IMR-90 (cell line): ENCODE measurements at regions of chr2 and their contacts with region 1.

Region 1: GRCh38 chr2:39469807-39470206 is 32.7 kb upstream of the MAP4K3 start:
- DNase-seq: peak; percentile 70
- ATAC-seq: peak; percentile 79
- H3K4me3 ChIP-seq: no peak overlapping the region; the same call in 1 of the 2 replicates
- H3K27ac ChIP-seq: peak overlapping the region; percentile 78
- H3K4me1 ChIP-seq: peaks cover 21% of the 10 kb centered on the region
- H3K27me3 ChIP-seq: no peaks in the 10 kb centered on the region
- CTCF ChIP-seq: no peak
- POLR2A ChIP-seq: no peak
- RAD21 ChIP-seq: no peak

Region 2: GRCh38 chr2:39504790-39505335 is 35.1 kb after region 1 on chr2:
- CTCF ChIA-PET with region 1: no interaction called
- POLR2A ChIA-PET with region 1: no interaction called
- dilution Hi-C with region 1: no loop called
- in situ Hi-C with region 1: no loop called
- intact Hi-C with region 1: loop called (anchors 5 kb)
- DNase-seq: peak; percentile 89
- ATAC-seq: peak; percentile 8
- H3K4me3 ChIP-seq: no peak overlapping the region
- H3K27ac ChIP-seq: peak overlapping the region; percentile 99
- H3K4me1 ChIP-seq: peaks cover 33% of the 10 kb centered on the region
- H3K27me3 ChIP-seq: no peaks in the 10 kb centered on the region
- CTCF ChIP-seq: no peak
- POLR2A ChIP-seq: no peak
- RAD21 ChIP-seq: no peak